Left ventricle myocardium inferior (tissue), 1 donor: ENCODE measurements at regions of chr3 and their contacts with region 1.

Region 1: GRCh38 chr3:97793420-97794019 is 28.3 kb upstream of the CRYBG3 start:
- DNase-seq: no peak
- H3K4me3 ChIP-seq: no peak overlapping the region
- H3K27ac ChIP-seq: no peak overlapping the region
- H3K4me1 ChIP-seq: no peaks in the 10 kb centered on the region
- H3K27me3 ChIP-seq: no peaks in the 10 kb centered on the region
- CTCF ChIP-seq: peak; percentile 88

Region 2: GRCh38 chr3:97432914-97433313 is 360.6 kb before region 1 on chr3:
- intact Hi-C with region 1: no loop called
- DNase-seq: no peak
- H3K4me3 ChIP-seq: no peak overlapping the region
- H3K27ac ChIP-seq: no peak overlapping the region
- H3K4me1 ChIP-seq: no peaks in the 10 kb centered on the region
- H3K27me3 ChIP-seq: no peaks in the 10 kb centered on the region
- CTCF ChIP-seq: no peak

Region 3: DNA sequence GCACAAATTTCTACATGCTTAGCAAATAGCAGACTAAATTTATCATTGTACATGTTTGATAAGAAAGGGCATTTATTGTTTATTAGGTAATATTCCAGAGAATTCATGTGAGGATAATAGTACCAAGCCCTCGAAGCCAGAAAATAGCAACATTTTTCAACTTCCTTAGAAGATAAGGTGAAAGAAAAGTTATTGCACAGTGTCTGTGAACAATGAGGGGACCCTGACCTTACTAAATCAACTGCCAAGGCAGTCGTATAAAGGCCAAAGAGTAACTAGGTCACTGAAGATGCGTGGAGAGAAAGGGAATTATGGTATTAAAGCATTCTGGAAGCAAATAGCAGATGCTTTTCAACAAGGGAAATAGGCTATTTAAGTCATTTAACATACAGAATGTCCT is 49.2 kb before region 1 on chr3:
- intact Hi-C with region 1: no loop called
- DNase-seq: no peak
- H3K4me3 ChIP-seq: no peak overlapping the region
- H3K27ac ChIP-seq: no peak overlapping the region
- H3K4me1 ChIP-seq: no peaks in the 10 kb centered on the region
- H3K27me3 ChIP-seq: no peaks in the 10 kb centered on the region
- CTCF ChIP-seq: no peak

Region 4: GRCh38 chr3:97932387-97932801 is 138.9 kb after region 1 on chr3:
- intact Hi-C with region 1: loop called (anchors 10 kb)
- DNase-seq: peak; percentile 34
- H3K4me3 ChIP-seq: no peak overlapping the region
- H3K27ac ChIP-seq: peak overlapping the region; percentile 61
- H3K4me1 ChIP-seq: peaks cover 26% of the 10 kb centered on the region
- H3K27me3 ChIP-seq: no peaks in the 10 kb centered on the region
- CTCF ChIP-seq: peak; percentile 12

Region 5: DNA sequence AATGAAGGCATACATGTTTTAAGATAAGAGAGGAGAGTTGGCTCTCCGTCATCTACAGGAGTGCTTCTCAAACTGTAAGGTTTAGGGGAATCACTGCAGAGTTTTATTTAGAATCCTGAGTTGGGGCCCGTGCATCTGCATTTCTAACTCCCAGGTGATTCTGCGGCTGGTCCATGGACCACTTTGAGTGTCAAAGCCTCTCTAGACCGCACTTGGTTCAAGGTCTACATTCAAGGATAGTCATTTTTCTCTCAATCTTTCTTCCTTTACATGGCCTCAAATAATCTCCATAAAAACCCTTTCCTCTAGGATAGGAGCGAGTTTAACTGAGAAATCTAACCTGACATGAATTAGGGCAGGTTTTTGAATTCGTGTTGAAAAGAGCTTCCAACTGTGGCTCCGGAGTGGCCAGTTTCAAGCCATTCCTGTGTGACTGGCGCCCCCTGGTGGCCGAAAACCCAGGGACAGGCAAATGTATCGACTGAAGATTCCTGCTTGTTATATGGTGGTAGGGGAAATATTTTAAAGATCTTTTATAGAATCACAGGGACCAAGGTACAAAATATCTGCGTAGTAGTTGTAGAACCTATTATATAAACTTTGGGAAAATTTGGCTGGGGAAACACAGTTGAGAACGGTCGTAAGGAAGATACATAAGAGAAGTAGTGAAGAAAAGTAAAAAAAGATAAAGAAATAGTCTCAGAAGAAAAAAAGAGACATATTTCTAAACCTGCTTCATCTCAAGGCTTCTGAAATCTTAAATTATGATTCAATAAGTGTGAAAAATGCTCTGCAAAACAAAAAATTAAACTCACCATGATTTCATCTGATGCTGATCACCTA is 229.7 kb after region 1 on chr3:
- intact Hi-C with region 1: loop called (anchors 2 kb)
- DNase-seq: peak; percentile 89
- H3K4me3 ChIP-seq: no peak overlapping the region
- H3K27ac ChIP-seq: no peak overlapping the region
- H3K4me1 ChIP-seq: peaks cover 16% of the 10 kb centered on the region
- H3K27me3 ChIP-seq: no peaks in the 10 kb centered on the region
- CTCF ChIP-seq: peak; percentile 96